ENCODE measurements at regions of chr14 and their contacts with region 1.

Region 1: GRCh38 chr14:91323671-91324605 is 79.4 kb upstream of the GPR68 start:
- DNase-seq: peak; percentile 97
- H3K4me3 Mint-ChIP-seq: peak overlapping the region; percentile 82
- H3K27ac Mint-ChIP-seq: peak overlapping the region; percentile 99
- H3K4me1 Mint-ChIP-seq: peaks cover 62% of the 10 kb centered on the region
- H3K27me3 Mint-ChIP-seq: no peaks in the 10 kb centered on the region

Region 2: GRCh38 chr14:91350813-91351511 is 27.0 kb after region 1 on chr14:
- CTCF ChIA-PET with region 1: interaction called, 12 read pairs
- POLR2A ChIA-PET with region 1: interaction called, 26 read pairs
- intact Hi-C with region 1: loop called (anchors 1 kb)
- DNase-seq: peak; percentile 86
- H3K4me3 Mint-ChIP-seq: peak overlapping the region; percentile 68
- H3K27ac Mint-ChIP-seq: peak overlapping the region; percentile 88
- H3K4me1 Mint-ChIP-seq: peaks cover 93% of the 10 kb centered on the region
- H3K27me3 Mint-ChIP-seq: no peaks in the 10 kb centered on the region

Region 3: DNA sequence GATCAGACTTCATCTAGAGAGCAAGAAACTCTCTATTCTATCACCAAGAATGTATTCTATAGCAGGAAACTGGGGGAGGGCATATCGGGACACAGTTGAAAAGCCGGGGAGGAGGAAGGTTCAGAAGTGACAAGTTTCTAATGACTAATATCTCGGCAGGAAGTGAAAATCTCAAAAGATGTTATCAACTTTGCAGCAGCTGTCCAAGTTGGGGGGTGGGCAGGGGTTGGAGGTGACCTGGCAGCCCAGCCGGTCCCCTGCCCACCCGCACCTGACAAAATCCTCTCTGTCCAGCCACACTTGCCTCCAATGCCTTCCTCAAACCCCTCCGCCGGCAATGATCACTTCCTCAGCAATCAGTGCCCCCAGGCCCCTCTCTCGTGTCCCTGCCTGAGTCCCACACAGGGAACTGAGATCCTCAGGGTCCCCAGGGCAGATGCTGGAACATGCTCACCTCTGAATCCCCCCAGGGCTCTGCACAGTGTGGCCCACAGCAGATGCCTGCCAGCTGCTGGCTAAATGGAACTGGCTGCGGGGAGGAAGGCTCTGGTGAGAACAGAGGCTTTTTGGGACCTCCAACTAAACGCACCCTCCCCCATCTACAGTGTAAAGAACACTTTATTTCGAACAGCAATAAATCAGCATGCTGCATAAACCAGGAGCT is 49.8 kb after region 1 on chr14:
- CTCF ChIA-PET with region 1: interaction called, 18 read pairs
- POLR2A ChIA-PET with region 1: no interaction called
- intact Hi-C with region 1: loop called (anchors 1 kb)
- DNase-seq: peak; percentile 78
- H3K4me3 Mint-ChIP-seq: peak overlapping the region; percentile 59
- H3K27ac Mint-ChIP-seq: peak overlapping the region; percentile 86
- H3K4me1 Mint-ChIP-seq: peaks cover 100% of the 10 kb centered on the region
- H3K27me3 Mint-ChIP-seq: no peaks in the 10 kb centered on the region

Region 4: GRCh38 chr14:91405241-91405721 is 81.3 kb after region 1 on chr14:
- CTCF ChIA-PET with region 1: interaction called, 59 read pairs
- POLR2A ChIA-PET with region 1: interaction called, 5 read pairs
- intact Hi-C with region 1: loop called (anchors 1 kb)
- DNase-seq: peak; percentile 79
- H3K4me3 Mint-ChIP-seq: peak overlapping the region; percentile 50
- H3K27ac Mint-ChIP-seq: peak overlapping the region; percentile 86
- H3K4me1 Mint-ChIP-seq: peaks cover 90% of the 10 kb centered on the region
- H3K27me3 Mint-ChIP-seq: no peaks in the 10 kb centered on the region

Region 5: DNA sequence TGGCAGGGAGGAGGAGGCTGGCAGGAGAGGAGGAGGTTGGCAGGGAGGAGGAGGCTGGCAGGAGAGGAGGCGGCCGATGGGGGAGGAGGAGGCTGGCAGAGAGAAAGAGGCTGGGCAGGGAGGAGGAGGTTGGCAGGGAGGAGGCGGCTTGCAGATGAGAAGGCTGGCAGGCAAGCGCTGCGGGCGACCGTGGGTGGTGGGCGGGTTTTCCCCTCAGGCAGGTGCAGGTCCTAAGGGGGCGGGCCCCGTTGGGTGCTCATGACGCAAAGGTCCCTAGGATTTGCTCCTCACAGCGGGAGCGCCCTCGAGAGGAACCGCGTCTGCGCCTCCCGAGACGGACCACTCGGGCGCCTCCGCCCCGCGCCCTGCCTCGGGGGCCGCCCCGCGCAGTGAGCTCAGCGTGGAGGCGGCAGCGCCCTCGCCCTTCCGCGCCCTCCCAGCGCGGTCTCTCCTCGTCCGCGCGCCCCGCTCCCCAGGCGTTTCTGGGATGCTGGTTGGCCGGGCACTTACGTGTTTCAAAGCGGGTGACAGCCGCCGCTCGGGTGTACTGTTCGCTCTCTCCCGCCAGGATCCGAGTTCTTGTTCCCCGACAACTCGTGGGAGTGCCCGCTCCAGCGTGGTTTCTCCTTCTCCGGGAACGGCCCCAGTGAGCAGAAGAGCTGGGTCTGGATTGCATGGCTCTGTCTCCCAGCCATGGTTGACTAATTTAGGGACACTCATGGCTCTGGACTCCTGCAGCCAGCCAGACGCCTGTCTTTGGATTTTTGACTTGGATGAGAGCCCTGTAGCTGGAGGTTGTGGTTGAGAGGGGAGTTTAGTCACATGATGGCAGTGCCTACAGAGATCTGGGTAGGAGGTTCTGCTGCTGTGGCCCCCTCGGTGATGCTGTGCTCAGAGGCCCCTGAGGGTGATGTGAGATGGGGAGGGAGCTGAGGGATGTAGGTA is 250.2 kb after region 1 on chr14:
- CTCF ChIA-PET with region 1: no interaction called
- POLR2A ChIA-PET with region 1: no interaction called
- intact Hi-C with region 1: loop called (anchors 5 kb)
- DNase-seq: peak; percentile 93
- H3K4me3 Mint-ChIP-seq: peak overlapping the region; percentile 79
- H3K27ac Mint-ChIP-seq: no peak overlapping the region
- H3K4me1 Mint-ChIP-seq: peaks cover 13% of the 10 kb centered on the region
- H3K27me3 Mint-ChIP-seq: peaks cover 11% of the 10 kb centered on the region